Posterior vena cava (tissue), 2 donors: ENCODE measurements at regions of chr12 and their contacts with region 1.

Region 1: DNA sequence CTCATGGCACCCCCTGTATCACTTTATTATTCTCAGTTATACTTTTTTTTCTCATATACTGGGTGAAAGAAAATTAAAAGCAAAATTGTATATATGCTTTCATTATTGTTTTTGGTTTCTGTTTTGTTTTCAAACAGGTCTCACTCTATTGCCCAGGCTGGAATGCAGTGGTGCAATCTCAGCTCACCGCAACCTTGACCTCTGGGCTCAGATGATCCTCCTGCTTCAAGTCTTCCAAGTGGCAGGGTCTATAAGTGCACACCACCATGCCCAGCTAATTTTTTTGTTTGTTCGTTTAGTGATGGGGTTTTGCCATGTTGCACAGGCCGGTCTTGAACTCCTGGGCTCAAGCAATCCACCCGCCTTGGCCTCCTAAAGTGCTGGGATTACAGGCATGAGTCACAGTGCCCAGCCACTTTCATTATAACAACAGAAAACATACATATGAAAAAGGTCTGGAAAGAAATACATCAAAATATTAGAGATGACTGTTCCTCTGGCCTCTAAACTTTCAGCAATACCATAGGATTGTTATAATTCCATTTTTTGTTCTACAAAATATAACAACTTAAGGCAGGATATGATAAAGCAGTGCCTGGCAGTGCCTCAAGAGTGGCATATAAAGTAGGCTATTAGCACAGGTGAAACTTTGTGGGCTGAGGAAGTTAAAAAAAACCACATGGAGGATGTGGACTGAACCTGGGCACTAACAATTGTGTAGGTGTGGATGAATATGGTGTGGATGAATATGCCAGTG is 5.8 kb upstream of the NTN4 start:
- DNase-seq: no peak

Region 2: DNA sequence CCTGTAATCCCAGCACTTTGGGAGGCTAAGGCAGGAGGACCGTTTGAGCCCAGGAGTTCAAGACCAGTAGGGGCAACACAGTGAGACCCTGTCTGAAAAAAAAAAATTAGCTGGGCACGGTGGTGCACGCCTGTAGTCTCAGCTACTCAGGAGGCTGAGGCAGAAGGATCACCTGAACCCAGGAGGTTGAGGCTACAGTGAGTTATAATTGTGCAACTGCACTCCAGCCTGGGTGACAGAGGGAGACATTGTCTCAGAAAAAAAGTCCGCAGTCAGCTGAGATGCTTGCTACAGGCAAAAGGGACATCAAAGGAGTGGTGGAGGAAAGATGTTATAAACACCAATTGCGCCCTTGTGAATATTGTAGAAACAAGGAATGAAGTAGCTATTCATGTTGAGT is 870.7 kb before region 1 on chr12:
- intact Hi-C with region 1: loop called in 1 of 2 experiments (anchors 5 kb)
- DNase-seq: no peak